Activated T-helper 2 cell treated with anti-CD3 and anti-CD28 coated beads, Interferon-gamma antibody, Interleukin-2, Interleukin-4, amounts not matched to agents 10 μg/mL and 5 μg/mL and 100 μg/mL, durations not matched to agents 14 hours and 24 hours and 36 hours (primary cell): ENCODE measurements at regions of chr16 and their contacts with region 1.

Region 1: DNA sequence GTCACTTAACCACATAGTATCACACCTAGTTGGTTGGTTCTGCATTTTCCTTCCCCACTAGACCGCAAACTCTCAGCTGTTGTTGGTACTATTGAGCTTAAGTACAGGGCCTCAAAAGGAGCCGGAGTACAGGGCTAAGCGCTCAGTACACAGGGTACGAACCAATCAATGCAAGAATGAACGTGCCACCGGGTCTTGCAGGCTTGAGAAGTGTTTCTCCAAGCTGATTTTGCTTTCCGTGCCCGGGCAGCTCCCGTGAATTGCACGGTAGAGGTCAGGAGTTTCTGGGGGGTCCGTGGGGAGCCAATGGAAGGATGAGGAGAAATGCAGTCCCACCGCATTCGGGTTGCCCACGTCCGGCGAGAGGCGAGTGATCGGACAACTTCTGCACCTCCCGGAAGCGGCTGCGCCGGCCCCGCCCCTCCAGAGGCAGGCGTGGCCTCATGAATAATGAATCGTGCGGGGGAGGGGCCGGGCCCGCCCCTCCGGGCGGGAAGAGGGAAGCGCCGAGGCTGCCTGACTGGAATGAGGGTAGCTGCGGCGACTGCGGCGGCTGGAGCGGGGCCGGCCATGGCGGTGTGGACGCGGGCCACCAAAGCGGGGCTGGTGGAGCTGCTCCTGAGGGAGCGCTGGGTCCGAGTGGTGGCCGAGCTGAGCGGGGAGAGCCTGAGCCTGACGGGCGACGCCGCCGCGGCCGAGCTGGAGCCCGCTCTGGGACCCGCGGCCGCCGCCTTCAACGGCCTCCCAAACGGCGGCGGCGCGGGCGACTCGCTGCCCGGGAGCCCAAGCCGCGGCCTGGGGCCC is at the start of gene SNTB2:
- DNase-seq: peak; percentile 81
- H3K4me3 Mint-ChIP-seq: peak within 1 kb of the TSS; percentile 92
- H3K27ac Mint-ChIP-seq: peak within 1 kb of the TSS; percentile 98
- H3K4me1 Mint-ChIP-seq: peaks cover 47% of the 10 kb centered on the region
- H3K27me3 Mint-ChIP-seq: no peaks in the 10 kb centered on the region
- total RNA-seq, gene SNTB2: 29.8 and 30.4 TPM in 2 replicates

Region 2: GRCh38 chr16:68760671-68761275 is 426.1 kb before region 1 on chr16:
- intact Hi-C with region 1: no loop called
- DNase-seq: peak; percentile 24
- H3K4me3 Mint-ChIP-seq: no peak overlapping the region
- H3K27ac Mint-ChIP-seq: peak overlapping the region; percentile 23
- H3K4me1 Mint-ChIP-seq: peaks cover 61% of the 10 kb centered on the region
- H3K27me3 Mint-ChIP-seq: no peaks in the 10 kb centered on the region

Region 3: DNA sequence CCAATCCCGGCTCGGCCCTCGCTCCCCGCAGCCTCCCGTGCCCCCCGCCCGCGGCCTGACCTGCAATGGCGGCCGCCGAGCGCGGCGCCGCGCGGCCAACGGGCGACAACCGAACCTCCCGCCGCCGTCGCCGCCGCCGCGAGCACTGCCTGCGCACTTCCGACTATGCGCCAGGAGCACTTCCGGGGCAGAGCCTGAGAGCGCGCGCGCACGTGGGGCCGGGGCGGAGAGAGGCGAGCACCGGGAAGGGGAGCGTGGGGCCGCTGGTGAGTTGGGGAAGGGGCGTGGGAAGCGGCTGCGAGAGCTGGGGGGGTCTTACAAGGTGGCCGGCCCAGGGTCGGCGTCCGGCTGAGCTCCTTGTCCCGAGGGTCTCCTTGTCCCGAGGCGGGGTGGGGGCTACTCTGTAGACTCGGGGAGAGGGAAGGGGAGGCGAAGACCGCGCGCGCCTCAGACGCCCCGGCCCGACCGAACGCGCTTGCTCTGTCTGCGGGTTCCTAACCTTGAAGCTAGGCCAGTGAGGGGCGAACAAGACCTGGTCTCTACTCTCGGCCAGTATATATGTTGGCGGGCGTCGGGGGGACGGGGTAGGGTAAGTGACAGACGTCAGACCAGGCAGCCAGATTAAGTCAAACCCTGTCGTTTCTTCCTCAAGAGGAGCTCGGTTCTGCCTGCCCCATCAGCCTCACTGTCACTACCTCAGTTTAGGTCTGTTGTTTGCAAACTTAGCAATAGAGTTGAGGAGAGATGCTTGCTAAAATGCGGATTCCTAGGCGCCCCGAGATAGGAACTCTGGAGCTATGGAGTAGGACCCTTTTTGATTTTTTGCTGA is 54.2 kb before region 1 on chr16 and contains the starts of genes CHTF8 and UTP4:
- intact Hi-C with region 1: loop called (anchors 5 kb)
- DNase-seq: peak; percentile 86
- H3K4me3 Mint-ChIP-seq: peak within 1 kb of the TSS; percentile 97
- H3K27ac Mint-ChIP-seq: peak within 1 kb of the TSS; percentile 89
- H3K4me1 Mint-ChIP-seq: peaks cover 44% of the 10 kb centered on the region
- H3K27me3 Mint-ChIP-seq: no peaks in the 10 kb centered on the region
- total RNA-seq, gene CHTF8: 121 and 138 TPM in 2 replicates
- total RNA-seq, gene UTP4: 104 and 107 TPM in 2 replicates

Region 4: DNA sequence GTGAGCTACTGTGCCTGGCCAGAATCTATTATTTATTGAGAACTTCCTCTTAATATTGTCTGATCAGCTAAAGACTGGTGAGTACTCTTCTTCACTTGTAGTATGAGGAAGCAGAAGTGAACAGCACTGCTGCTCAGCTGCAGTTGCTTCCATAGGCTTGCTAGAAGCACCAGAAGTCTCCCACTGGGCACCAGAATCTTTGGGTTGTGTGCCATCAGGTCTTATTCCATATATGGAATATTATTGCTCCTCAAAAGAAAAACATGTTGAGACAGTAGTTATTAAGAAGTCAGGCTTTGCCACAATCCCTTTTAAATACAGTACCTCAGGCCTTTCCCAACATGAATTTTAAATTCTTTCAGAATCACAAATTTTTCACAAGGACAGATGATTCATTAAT is 17.3 kb after region 1 on chr16:
- intact Hi-C with region 1: loop called (anchors 1 kb)
- DNase-seq: no peak
- H3K4me3 Mint-ChIP-seq: no peak overlapping the region
- H3K27ac Mint-ChIP-seq: peak overlapping the region; percentile 87
- H3K4me1 Mint-ChIP-seq: peaks cover 19% of the 10 kb centered on the region
- H3K27me3 Mint-ChIP-seq: no peaks in the 10 kb centered on the region